K562 (cell line): ENCODE measurements at regions of chr21 and their contacts with region 1.

Region 1: DNA sequence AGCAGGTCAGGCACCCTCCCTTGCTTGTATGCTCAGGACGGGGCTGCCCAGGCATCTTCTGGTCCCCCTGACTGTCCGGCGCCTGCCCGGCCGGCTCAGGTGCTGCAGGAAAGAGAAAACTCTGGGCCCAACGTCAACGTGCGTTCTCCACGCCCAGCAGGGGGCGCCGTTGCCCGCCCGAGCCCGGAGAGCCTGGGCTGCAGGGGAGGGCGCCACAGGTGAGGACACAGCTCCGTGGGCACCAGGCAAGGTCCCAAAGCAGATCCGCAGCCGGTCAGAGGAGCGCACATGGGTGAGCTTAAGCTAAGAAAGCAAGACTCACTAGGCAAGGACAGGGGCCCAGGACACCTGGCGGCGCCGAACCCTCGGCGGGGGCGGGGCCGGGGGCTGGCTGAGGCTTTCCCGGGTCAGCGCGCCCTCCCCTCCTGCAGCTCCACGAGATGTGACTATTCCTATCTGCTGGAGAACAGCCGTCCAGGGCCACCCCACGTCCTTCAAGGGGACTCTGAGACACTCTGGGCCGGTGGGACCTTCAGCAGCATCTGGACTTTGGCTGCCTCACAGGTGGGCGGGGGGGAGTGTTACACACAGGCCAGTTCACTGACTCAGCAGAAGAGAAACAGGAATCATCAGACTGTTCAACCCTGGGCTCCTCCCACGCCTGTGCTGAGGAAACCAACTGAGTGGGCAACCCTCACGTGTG is 29.3 kb downstream of the KRTAP10-1 start:
- DNase-seq: peak; percentile 78 to 90 (median 84)
- ATAC-seq: peak; percentile 95
- H3K4me3 ChIP-seq: no peak overlapping the region
- H3K27ac ChIP-seq: no peak overlapping the region
- H3K4me1 ChIP-seq: peaks cover 0 to 18% of the 10 kb centered on the region in 2 experiments; a peak in 2 of 5 replicates
- H3K27me3 ChIP-seq: peaks cover 32 to 57% of the 10 kb centered on the region in 2 experiments
- CTCF ChIP-seq: peak; percentile 94 to 96 (median 95)
- EP300 ChIP-seq: no peak
- POLR2A ChIP-seq: no peak
- RAD21 ChIP-seq: peak; percentile 93 to 96

Region 2: GRCh38 chr21:44742418-44743153 is 231.9 kb after region 1 on chr21:
- CTCF ChIA-PET with region 1: interaction called, 5 read pairs
- POLR2A ChIA-PET with region 1: no interaction called
- in situ Hi-C with region 1: loop called (anchors 5 kb)
- intact Hi-C with region 1: loop called (anchors 1 kb)
- DNase-seq: peak in 1 of 4 experiments; percentile 41
- ATAC-seq: 0 out of 3 replicates have a peak, but pooled peaks have one; percentile 50
- H3K4me3 ChIP-seq: no peak overlapping the region
- H3K27ac ChIP-seq: no peak overlapping the region
- H3K4me1 ChIP-seq: no peaks in the 10 kb centered on the region
- H3K27me3 ChIP-seq: peaks cover 26 to 31% of the 10 kb centered on the region in 2 experiments
- CTCF ChIP-seq: peak; percentile 29 to 67 (median 35); a peak in 4 of 6 replicates
- EP300 ChIP-seq: no peak
- POLR2A ChIP-seq: no peak
- RAD21 ChIP-seq: peak; percentile 64 to 79

Region 3: DNA sequence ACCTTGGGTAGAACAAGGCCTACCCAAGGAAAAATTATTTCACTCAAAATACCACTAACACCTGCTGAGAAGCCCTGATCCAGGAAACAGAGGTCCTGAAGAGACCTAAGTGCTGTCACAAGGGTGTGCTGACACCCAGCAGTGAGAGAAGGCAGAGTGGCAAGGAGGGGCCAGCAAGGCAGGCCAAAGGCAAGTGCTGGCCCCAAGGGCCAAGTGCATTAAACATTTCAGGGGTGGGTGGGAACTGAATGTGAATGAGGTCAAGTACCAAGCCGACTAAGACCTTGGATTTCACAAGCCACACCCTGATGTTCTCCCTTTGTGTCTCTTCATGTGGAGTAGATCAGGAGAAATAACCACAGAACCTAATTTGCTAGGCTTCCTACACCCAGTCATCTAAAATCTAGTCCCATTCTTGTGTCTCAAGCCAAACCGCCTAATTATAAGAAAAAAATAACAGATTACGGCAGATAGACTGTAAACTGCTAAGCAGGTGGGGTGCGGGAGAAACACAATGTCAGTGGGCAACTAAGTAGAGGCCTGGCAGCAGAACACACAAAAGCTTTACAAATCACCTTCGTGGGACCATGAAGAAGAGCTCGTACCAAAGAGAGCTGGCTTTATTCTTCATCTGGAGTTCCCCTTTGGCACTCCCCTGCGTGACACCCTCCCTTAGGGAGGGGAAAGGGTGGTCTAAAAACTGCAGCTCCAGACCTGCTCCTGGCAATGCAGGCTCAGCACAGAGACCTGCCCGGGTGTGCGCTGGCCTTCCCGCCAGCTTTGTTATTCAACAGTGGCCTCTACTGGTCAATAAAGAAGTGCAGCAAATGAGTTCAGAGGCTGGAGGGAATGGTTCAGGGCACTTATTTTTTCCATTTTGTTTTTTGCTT is 282.3 kb after region 1 on chr21:
- CTCF ChIA-PET with region 1: interaction called, 16 read pairs
- POLR2A ChIA-PET with region 1: no interaction called
- in situ Hi-C with region 1: loop called (anchors 5 kb)
- intact Hi-C with region 1: loop called (anchors 2 kb)
- DNase-seq: peak; percentile 75 to 87 (median 81)
- ATAC-seq: peak; percentile 97
- H3K4me3 ChIP-seq: no peak overlapping the region
- H3K27ac ChIP-seq: no peak overlapping the region; the same call in 2 of the 3 replicates
- H3K4me1 ChIP-seq: peaks cover 2 to 13% of the 10 kb centered on the region in 2 experiments; a peak in 4 of 5 replicates
- H3K27me3 ChIP-seq: no peaks in the 10 kb centered on the region
- CTCF ChIP-seq: peak; percentile 70 to 91 (median 90)
- EP300 ChIP-seq: no peak
- POLR2A ChIP-seq: no peak
- RAD21 ChIP-seq: peak; percentile 83 to 85

Region 4: GRCh38 chr21:44927587-44928461 is 417.2 kb after region 1 on chr21:
- CTCF ChIA-PET with region 1: interaction called, 3 read pairs
- POLR2A ChIA-PET with region 1: no interaction called
- in situ Hi-C with region 1: loop called (anchors 10 kb)
- intact Hi-C with region 1: loop called (anchors 10 kb)
- DNase-seq: peak; percentile 58 to 72 (median 63)
- ATAC-seq: peak; percentile 31; the same call in 2 of the 3 replicates
- H3K4me3 ChIP-seq: no peak overlapping the region
- H3K27ac ChIP-seq: no peak overlapping the region
- H3K4me1 ChIP-seq: peaks cover 8 to 34% of the 10 kb centered on the region in 2 experiments; a peak in 4 of 5 replicates
- H3K27me3 ChIP-seq: peaks cover 31 to 53% of the 10 kb centered on the region in 2 experiments
- CTCF ChIP-seq: no peak
- EP300 ChIP-seq: no peak
- POLR2A ChIP-seq: no peak
- RAD21 ChIP-seq: no peak

Region 5: GRCh38 chr21:44939532-44940115 is 429.0 kb after region 1 on chr21 and contains the start of gene SLX9:
- CTCF ChIA-PET with region 1: no interaction called
- POLR2A ChIA-PET with region 1: interaction called, 4 read pairs
- in situ Hi-C with region 1: loop called (anchors 10 kb)
- intact Hi-C with region 1: no loop called
- DNase-seq: peak; percentile 93 to 97 (median 96)
- ATAC-seq: peak; percentile 96
- H3K4me3 ChIP-seq: peak within 1 kb of the TSS; percentile 84
- H3K27ac ChIP-seq: peak within 1 kb of the TSS; percentile 83
- H3K4me1 ChIP-seq: peaks cover 16 to 33% of the 10 kb centered on the region in 2 experiments; a peak in 4 of 5 replicates
- H3K27me3 ChIP-seq: no peaks in the 10 kb centered on the region
- CTCF ChIP-seq: peak in 2 of 3 experiments; percentile 11 to 15; a peak in 1 of 6 replicates
- EP300 ChIP-seq: 0 out of 2 replicates have a peak, but pooled peaks have one; percentile 31
- POLR2A ChIP-seq: peak; percentile 96
- RAD21 ChIP-seq: no peak; a peak in 1 of 4 replicates
- polyA plus RNA-seq, gene SLX9: 1.2 to 1.8 TPM